Prostate gland (tissue), 2 donors: ENCODE measurements at regions of chr17 and their contacts with region 1.

Region 1: DNA sequence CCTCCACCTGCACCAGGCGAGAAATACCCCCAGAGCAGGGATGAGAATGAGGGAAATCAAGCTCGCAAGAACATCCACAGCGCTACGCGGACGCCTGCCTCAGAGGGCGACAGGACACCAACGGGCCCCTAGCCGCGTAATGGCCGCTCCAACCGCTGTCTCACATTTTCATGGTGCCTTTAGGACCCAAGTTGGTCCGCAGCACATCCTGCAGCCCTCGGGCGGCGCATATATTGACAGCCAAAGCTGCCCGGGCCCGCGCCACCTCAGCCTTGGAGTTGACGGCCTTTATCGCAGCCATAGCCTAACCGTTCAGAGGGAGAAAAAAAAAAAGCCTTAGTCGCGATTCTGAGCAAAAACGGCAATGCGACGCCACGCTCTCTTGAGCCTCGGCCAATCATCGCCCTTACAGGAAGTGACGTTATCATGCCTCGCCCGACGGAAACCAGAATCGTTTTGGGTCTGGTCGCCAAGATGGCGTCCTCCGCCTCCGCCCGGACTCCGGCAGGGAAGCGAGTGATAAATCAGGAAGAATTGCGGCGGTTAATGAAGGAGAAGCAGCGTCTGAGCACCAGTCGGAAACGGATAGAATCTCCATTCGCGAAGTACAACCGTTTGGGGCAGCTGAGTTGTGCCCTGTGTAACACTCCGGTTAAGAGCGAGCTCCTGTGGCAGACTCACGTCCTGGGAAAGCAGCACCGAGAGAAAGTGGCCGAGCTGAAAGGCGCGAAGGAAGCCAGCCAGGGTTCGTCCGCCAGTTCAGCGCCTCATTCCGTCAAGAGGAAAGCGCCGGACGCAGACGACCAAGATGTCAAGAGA is at the starts of genes CCT6B and ZNF830:
- DNase-seq: peak; percentile 91
- H3K4me3 ChIP-seq: peak within 1 kb of the TSS; percentile 80 to 89
- H3K27ac ChIP-seq: peak within 1 kb of the TSS; percentile 89 to 92
- H3K4me1 ChIP-seq: no peaks in the 10 kb centered on the region
- H3K27me3 ChIP-seq: no peaks in the 10 kb centered on the region
- CTCF ChIP-seq: peak in 1 of 4 experiments; percentile 6
- POLR2A ChIP-seq: peak; percentile 59
- total RNA-seq, gene CCT6B: 7.1 to 11.9 TPM
- total RNA-seq, gene ZNF830: 15.0 to 21.0 TPM

Region 2: GRCh38 chr17:35088881-35089585 is 127.7 kb after region 1 on chr17:
- intact Hi-C with region 1: loop called (anchors 2 kb)
- DNase-seq: peak; percentile 86
- H3K4me3 ChIP-seq: peak overlapping the region; percentile 89 to 90
- H3K27ac ChIP-seq: peak overlapping the region; percentile 95 to 96
- H3K4me1 ChIP-seq: no peaks in the 10 kb centered on the region
- H3K27me3 ChIP-seq: no peaks in the 10 kb centered on the region
- CTCF ChIP-seq: peak; percentile 87 to 96 (median 94)
- POLR2A ChIP-seq: peak; percentile 56

Region 3: DNA sequence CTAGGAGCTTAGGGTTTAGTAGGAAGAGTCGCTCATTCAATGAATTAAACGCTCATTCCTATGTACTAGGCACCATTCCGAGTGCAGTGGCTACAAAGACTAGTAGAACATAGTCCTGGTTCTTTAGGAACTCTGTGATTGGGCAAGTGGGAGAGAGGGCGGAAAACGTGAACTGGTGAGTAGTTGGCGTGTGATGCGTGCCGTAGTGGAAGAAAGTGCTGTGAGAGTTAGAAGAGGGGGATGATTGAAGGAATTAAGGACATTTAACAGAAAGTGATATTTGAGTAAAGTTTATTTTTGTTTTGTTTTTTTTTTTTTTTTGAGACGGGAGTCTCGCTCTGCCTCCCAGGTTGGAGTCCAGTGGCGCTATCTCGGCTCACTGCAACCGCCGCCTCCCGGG is 607.2 kb after region 1 on chr17:
- intact Hi-C with region 1: loop called (anchors 10 kb)
- DNase-seq: no peak
- H3K4me3 ChIP-seq: peak overlapping the region; percentile 45 to 58
- H3K27ac ChIP-seq: peak overlapping the region; percentile 48 to 68
- H3K4me1 ChIP-seq: peaks cover 11% of the 10 kb centered on the region
- H3K27me3 ChIP-seq: no peaks in the 10 kb centered on the region
- CTCF ChIP-seq: no peak
- POLR2A ChIP-seq: no peak